Activated T-helper 1 cell treated with anti-CD3 and anti-CD28 coated beads, Interleukin-12 subunit alpha, Interleukin-12 subunit beta, Interleukin-2, Interleukin-4 antibody, amounts not matched to agents 30 ng/mL and 10 ng/mL and 1 ng/mL, durations not matched to agents 14 hours and 24 hours and 36 hours (primary cell): ENCODE measurements at regions of chr6 and their contacts with region 1.

Region 1: GRCh38 chr6:139262519-139263300 is 29.1 kb downstream of the TXLNB start:
- DNase-seq: peak; percentile 24
- H3K4me3 Mint-ChIP-seq: peak overlapping the region; percentile 72
- H3K27ac Mint-ChIP-seq: peak overlapping the region; percentile 90
- H3K4me1 Mint-ChIP-seq: peaks cover 37% of the 10 kb centered on the region
- H3K27me3 Mint-ChIP-seq: no peaks in the 10 kb centered on the region

Region 2: DNA sequence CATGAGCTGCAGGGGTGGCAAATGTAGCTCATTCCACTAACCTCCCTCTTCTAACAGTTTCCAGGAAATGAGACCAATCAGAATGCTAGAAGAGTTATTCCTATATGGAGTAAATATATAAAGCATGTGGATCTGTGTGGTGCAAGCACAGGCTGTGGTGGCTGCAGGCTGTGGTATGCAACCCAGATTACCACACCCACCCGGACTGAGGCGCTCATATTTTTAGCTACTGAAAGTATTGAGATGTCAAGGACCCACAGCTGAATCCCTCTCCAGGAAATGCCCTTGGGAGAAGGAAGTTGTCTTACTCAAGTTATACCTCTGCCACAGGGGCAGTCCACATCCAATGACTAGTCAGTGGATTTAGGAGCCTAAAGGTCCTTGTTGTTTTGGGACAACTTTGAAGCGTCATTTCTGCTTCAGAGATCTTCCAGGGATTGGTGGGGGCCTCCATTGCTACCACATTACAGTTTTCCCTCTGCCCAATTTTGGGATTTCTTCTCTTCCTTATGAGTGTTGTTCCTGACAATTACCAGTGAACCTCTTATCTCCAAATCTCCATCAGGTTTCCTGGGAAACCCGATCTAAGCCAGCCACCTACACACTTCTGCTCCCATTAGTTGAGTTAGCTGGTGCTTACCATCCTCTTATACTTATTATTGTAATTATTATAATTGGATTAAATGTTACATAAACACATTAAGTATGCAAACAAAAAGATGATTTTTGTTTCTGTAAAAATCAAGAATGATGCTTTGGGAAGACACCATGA is 262.6 kb before region 1 on chr6:
- intact Hi-C with region 1: no loop called
- DNase-seq: no peak
- H3K4me3 Mint-ChIP-seq: no peak overlapping the region
- H3K27ac Mint-ChIP-seq: no peak overlapping the region
- H3K4me1 Mint-ChIP-seq: no peaks in the 10 kb centered on the region
- H3K27me3 Mint-ChIP-seq: peaks cover 14% of the 10 kb centered on the region

Region 3: GRCh38 chr6:139146317-139146726 is 116.4 kb before region 1 on chr6:
- intact Hi-C with region 1: loop called (anchors 2 kb)
- DNase-seq: no peak
- H3K4me3 Mint-ChIP-seq: peak overlapping the region; percentile 65
- H3K27ac Mint-ChIP-seq: peak overlapping the region; percentile 85
- H3K4me1 Mint-ChIP-seq: peaks cover 92% of the 10 kb centered on the region
- H3K27me3 Mint-ChIP-seq: no peaks in the 10 kb centered on the region

Region 4: GRCh38 chr6:139153855-139154254 is 108.9 kb before region 1 on chr6:
- intact Hi-C with region 1: loop called (anchors 1 kb)
- DNase-seq: no peak
- H3K4me3 Mint-ChIP-seq: peak overlapping the region; percentile 66
- H3K27ac Mint-ChIP-seq: peak overlapping the region; percentile 90
- H3K4me1 Mint-ChIP-seq: peaks cover 73% of the 10 kb centered on the region
- H3K27me3 Mint-ChIP-seq: no peaks in the 10 kb centered on the region

Region 5: GRCh38 chr6:139219271-139219729 is 43.4 kb before region 1 on chr6:
- intact Hi-C with region 1: loop called (anchors 1 kb)
- DNase-seq: peak; percentile 62
- H3K4me3 Mint-ChIP-seq: peak overlapping the region; percentile 38
- H3K27ac Mint-ChIP-seq: peak overlapping the region; percentile 61
- H3K4me1 Mint-ChIP-seq: peaks cover 10% of the 10 kb centered on the region
- H3K27me3 Mint-ChIP-seq: no peaks in the 10 kb centered on the region

Region 6: GRCh38 chr6:139250296-139251044 is 12.2 kb before region 1 on chr6:
- intact Hi-C with region 1: loop called (anchors 1 kb)
- DNase-seq: peak; percentile 43
- H3K4me3 Mint-ChIP-seq: peak overlapping the region; percentile 43
- H3K27ac Mint-ChIP-seq: peak overlapping the region; percentile 91
- H3K4me1 Mint-ChIP-seq: peaks cover 45% of the 10 kb centered on the region
- H3K27me3 Mint-ChIP-seq: no peaks in the 10 kb centered on the region

Region 7: DNA sequence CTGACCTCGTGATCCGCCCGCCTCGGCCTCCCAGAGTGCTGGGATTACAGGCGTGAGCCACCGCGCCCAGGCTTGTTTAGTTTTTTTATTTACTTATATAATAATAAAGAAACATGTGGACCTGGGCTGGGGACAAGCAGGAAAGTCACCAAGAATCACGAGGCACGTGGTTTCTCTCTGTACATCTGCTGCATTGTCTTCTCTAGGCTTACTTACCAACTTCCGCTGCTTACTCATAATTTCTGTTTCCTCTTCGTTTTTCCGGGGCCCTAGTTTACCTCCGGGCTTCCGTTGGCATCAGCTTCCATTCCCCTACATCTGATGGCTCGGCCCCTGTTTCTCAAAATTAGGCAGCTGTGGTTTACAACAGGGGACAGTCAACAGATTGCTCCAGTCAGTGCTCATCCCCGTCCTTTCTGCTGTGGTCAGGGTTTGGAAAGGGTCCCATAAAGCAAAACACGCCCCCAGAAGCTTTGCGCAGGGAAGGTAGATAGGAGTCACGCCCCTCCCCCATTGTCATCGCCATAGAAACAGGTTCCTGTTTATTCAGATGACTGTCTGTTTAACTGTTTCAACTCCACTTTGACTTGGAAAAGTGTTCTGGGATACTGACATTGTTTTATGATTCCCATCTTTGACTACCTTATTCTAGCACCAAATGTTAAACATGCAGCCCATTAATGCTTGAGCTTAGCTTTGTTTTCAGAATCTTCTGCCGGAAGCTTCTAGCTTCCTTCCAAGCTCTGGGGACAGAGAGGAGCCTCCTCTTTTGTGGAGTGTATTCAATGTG is 61.0 kb after region 1 on chr6:
- intact Hi-C with region 1: loop called (anchors 1 kb)
- DNase-seq: peak; percentile 70
- H3K4me3 Mint-ChIP-seq: peak overlapping the region; percentile 63
- H3K27ac Mint-ChIP-seq: peak overlapping the region; percentile 90
- H3K4me1 Mint-ChIP-seq: peaks cover 43% of the 10 kb centered on the region
- H3K27me3 Mint-ChIP-seq: no peaks in the 10 kb centered on the region

Region 8: DNA sequence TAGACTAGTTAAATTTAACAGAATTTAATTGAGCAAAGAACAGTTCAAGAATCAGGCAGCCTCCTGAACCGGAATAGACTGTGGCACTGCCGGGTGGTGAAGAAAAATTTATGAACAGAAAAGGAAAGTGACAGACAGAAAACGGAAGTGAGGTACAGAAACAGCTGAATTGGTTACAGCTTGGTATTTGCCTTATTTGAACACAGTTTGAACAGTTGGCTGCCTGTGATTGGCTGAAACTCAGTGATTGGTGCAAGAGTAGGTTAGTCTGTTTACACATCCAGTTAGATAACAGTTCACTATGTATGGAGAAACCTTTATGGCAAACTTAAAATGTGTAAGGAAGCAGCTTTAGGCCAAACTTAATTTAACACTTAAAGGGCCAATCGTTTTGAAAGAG is 227.8 kb after region 1 on chr6:
- intact Hi-C with region 1: no loop called
- DNase-seq: no peak
- H3K4me3 Mint-ChIP-seq: no peak overlapping the region
- H3K27ac Mint-ChIP-seq: no peak overlapping the region
- H3K4me1 Mint-ChIP-seq: peaks cover 6% of the 10 kb centered on the region
- H3K27me3 Mint-ChIP-seq: no peaks in the 10 kb centered on the region